ENCODE measurements at regions of chr4 and their contacts with region 1.

Region 1: GRCh38 chr4:145618210-145618931 is 814 bp upstream of the MMAA start:
- DNase-seq: peak; percentile 40
- H3K4me3 Mint-ChIP-seq: peak overlapping the region; percentile 86
- H3K27ac Mint-ChIP-seq: peak overlapping the region; percentile 97
- H3K4me1 Mint-ChIP-seq: peaks cover 38% of the 10 kb centered on the region
- H3K27me3 Mint-ChIP-seq: no peaks in the 10 kb centered on the region

Region 2: DNA sequence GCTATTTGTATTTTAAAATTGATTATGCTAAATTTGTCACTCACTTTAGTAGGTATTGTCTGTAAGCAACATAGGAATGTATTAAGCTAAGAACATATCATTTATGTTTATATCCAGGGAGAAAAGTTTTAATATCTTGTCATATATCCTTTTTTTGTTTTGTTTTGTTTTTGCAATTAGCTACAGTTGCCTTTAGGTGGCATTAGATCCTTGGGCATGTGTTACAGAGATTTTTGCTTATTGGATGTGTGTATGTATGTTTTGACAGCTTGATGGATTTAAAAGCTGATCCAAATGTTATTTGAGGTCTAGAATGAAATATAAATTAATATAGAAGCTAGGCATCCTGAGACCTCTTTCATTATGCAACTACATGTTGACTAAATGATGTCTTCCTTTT is 401.8 kb before region 1 on chr4:
- CTCF ChIA-PET with region 1: interaction called, 24 read pairs
- DNase-seq: no peak
- H3K4me3 Mint-ChIP-seq: no peak overlapping the region
- H3K27ac Mint-ChIP-seq: no peak overlapping the region
- H3K4me1 Mint-ChIP-seq: no peaks in the 10 kb centered on the region
- H3K27me3 Mint-ChIP-seq: peaks cover 1% of the 10 kb centered on the region

Region 3: GRCh38 chr4:145639186-145639698 is 20.9 kb after region 1 on chr4:
- CTCF ChIA-PET with region 1: no interaction called
- DNase-seq: no peak
- H3K4me3 Mint-ChIP-seq: no peak overlapping the region
- H3K27ac Mint-ChIP-seq: no peak overlapping the region
- H3K4me1 Mint-ChIP-seq: peaks cover 11% of the 10 kb centered on the region
- H3K27me3 Mint-ChIP-seq: no peaks in the 10 kb centered on the region

Measured in activated naive CD4-positive, alpha-beta T cell treated with anti-CD3 and anti-CD28 coated beads, Interleukin-2, amount 10 ng/mL, durations not matched to agents 7 days and 5 days (primary cell).